ENCODE measurements at regions of chr15 and their contacts with region 1.

Region 1: GRCh38 chr15:75302318-75302717 is 19.7 kb downstream of the GOLGA6D start:
- DNase-seq: no peak
- ATAC-seq: no peak
- H3K4me3 ChIP-seq: no peak overlapping the region
- H3K27ac ChIP-seq: no peak overlapping the region
- H3K4me1 ChIP-seq: peaks cover 0 to 3% of the 10 kb centered on the region in 2 experiments; a peak in 1 of 5 replicates
- H3K27me3 ChIP-seq: peaks cover 10 to 29% of the 10 kb centered on the region in 2 experiments; a peak in 4 of 5 replicates
- CTCF ChIP-seq: no peak
- EP300 ChIP-seq: no peak
- POLR2A ChIP-seq: no peak
- RAD21 ChIP-seq: no peak

Region 2: DNA sequence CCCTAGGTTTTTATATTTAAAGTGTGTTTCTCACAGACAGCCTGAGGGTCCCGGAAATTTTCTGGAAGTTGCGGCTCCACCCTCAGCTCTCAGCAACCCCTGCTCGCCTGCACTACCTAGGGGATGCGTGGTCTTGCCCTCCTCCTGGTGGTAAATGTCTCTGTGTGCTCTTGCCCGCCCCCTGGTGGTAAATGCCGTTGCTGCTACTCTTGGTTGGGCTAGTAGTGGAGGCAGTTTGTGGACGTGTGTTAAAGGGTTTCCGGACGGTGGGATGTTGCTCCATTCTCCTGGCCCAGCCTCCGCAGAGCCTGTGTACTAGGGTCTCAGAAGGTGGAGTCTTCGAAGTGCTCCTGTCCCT is 1337.6 kb before region 1 on chr15:
- CTCF ChIA-PET with region 1: no interaction called
- POLR2A ChIA-PET with region 1: no interaction called
- in situ Hi-C with region 1: loop called (anchors 25 kb)
- intact Hi-C with region 1: no loop called
- DNase-seq: peak; percentile 79 to 84 (median 81)
- ATAC-seq: peak; percentile 99
- H3K4me3 ChIP-seq: no peak overlapping the region
- H3K27ac ChIP-seq: no peak overlapping the region
- H3K4me1 ChIP-seq: peaks cover 0 to 5% of the 10 kb centered on the region in 2 experiments; a peak in 2 of 5 replicates
- H3K27me3 ChIP-seq: peaks cover 6 to 19% of the 10 kb centered on the region in 2 experiments; a peak in 4 of 5 replicates
- CTCF ChIP-seq: peak; percentile 95 to 99 (median 96)
- EP300 ChIP-seq: no peak
- POLR2A ChIP-seq: no peak
- RAD21 ChIP-seq: peak; percentile 49 to 75

Region 3: DNA sequence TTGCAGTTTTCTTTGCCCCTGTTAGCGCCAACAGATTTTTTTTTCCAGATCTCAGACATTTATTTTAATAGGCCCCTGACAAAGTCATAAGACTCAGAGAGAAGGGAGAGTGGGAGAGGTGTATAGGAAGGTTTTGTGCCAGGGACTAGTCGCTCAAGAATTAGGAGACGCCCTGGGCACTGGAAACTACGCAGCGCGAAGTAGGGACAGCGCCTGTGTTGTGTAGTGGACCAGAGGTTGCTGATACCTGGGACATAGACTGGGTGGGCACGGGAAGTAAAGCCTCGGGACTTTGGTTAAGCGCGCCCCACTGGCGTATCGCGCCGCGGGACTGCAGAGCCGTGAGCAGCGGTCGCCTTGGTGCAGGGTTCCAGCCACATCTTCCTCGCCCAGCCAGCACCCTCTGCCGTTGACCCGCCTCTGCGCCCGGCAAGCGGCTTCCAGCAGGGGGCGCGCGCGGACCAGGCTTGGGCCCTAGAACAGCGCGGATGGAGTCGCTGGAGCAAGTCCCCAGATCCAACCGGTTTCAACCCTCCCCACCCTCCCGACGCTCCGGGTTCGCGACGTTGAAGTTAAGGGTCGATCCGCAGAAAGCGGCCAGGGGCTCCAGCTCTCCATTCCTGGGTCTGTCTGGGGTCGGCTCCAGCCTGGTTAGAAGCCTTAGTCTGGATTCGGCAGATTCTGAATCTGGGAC is 1174.9 kb before region 1 on chr15:
- CTCF ChIA-PET with region 1: no interaction called
- POLR2A ChIA-PET with region 1: no interaction called
- in situ Hi-C with region 1: loop called (anchors 25 kb)
- intact Hi-C with region 1: no loop called
- DNase-seq: peak; percentile 82 to 91 (median 87)
- ATAC-seq: peak; percentile 99
- H3K4me3 ChIP-seq: no peak overlapping the region
- H3K27ac ChIP-seq: no peak overlapping the region
- H3K4me1 ChIP-seq: peaks cover 0 to 28% of the 10 kb centered on the region in 2 experiments; a peak in 2 of 5 replicates
- H3K27me3 ChIP-seq: peaks cover 40 to 66% of the 10 kb centered on the region in 2 experiments
- CTCF ChIP-seq: peak; percentile 91 to 99 (median 99)
- EP300 ChIP-seq: no peak
- POLR2A ChIP-seq: no peak
- RAD21 ChIP-seq: peak; percentile 90 to 97

Region 4: GRCh38 chr15:74340139-74340538 is 962.2 kb before region 1 on chr15:
- CTCF ChIA-PET with region 1: no interaction called
- POLR2A ChIA-PET with region 1: no interaction called
- in situ Hi-C with region 1: loop called (anchors 25 kb)
- intact Hi-C with region 1: no loop called
- DNase-seq: no peak
- ATAC-seq: no peak
- H3K4me3 ChIP-seq: no peak overlapping the region
- H3K27ac ChIP-seq: no peak overlapping the region
- H3K4me1 ChIP-seq: peaks cover 0 to 5% of the 10 kb centered on the region in 2 experiments; a peak in 2 of 5 replicates
- H3K27me3 ChIP-seq: peaks cover 20 to 83% of the 10 kb centered on the region in 2 experiments
- CTCF ChIP-seq: no peak
- EP300 ChIP-seq: no peak
- POLR2A ChIP-seq: no peak
- RAD21 ChIP-seq: no peak

Region 5: GRCh38 chr15:75130597-75131268 is 171.6 kb before region 1 on chr15:
- CTCF ChIA-PET with region 1: no interaction called
- POLR2A ChIA-PET with region 1: no interaction called
- in situ Hi-C with region 1: no loop called
- intact Hi-C with region 1: no loop called
- DNase-seq: no peak
- ATAC-seq: no peak
- H3K4me3 ChIP-seq: no peak overlapping the region
- H3K27ac ChIP-seq: no peak overlapping the region
- H3K4me1 ChIP-seq: peaks cover 4 to 7% of the 10 kb centered on the region in 2 experiments; a peak in 2 of 5 replicates
- H3K27me3 ChIP-seq: no peaks in the 10 kb centered on the region
- CTCF ChIP-seq: no peak
- EP300 ChIP-seq: no peak
- POLR2A ChIP-seq: no peak
- RAD21 ChIP-seq: no peak